ENCODE measurements at regions of chr18 and their contacts with region 1.

Region 1: GRCh38 chr18:45874491-45875184 is 49.2 kb downstream of the SIGLEC15 start:
- DNase-seq: peak; percentile 84
- ATAC-seq: peak; percentile 91
- H3K4me3 Mint-ChIP-seq: peak overlapping the region; percentile 41
- H3K27ac Mint-ChIP-seq: peak overlapping the region; percentile 96
- H3K4me1 Mint-ChIP-seq: peaks cover 34% of the 10 kb centered on the region
- H3K27me3 Mint-ChIP-seq: no peaks in the 10 kb centered on the region

Region 2: GRCh38 chr18:45526114-45526841 is 348.4 kb before region 1 on chr18:
- CTCF ChIA-PET with region 1: no interaction called
- POLR2A ChIA-PET with region 1: no interaction called
- intact Hi-C with region 1: no loop called
- DNase-seq: no peak
- ATAC-seq: no peak
- H3K4me3 Mint-ChIP-seq: no peak overlapping the region
- H3K27ac Mint-ChIP-seq: no peak overlapping the region
- H3K4me1 Mint-ChIP-seq: no peaks in the 10 kb centered on the region
- H3K27me3 Mint-ChIP-seq: peaks cover 9% of the 10 kb centered on the region

Region 3: GRCh38 chr18:45670281-45670962 is 204.2 kb before region 1 on chr18:
- CTCF ChIA-PET with region 1: interaction called, 172 read pairs
- POLR2A ChIA-PET with region 1: no interaction called
- intact Hi-C with region 1: loop called (anchors 1 kb)
- DNase-seq: peak; percentile 79
- ATAC-seq: peak; percentile 73
- H3K4me3 Mint-ChIP-seq: peak overlapping the region; percentile 56
- H3K27ac Mint-ChIP-seq: peak overlapping the region; percentile 85
- H3K4me1 Mint-ChIP-seq: peaks cover 63% of the 10 kb centered on the region
- H3K27me3 Mint-ChIP-seq: no peaks in the 10 kb centered on the region

Region 4: DNA sequence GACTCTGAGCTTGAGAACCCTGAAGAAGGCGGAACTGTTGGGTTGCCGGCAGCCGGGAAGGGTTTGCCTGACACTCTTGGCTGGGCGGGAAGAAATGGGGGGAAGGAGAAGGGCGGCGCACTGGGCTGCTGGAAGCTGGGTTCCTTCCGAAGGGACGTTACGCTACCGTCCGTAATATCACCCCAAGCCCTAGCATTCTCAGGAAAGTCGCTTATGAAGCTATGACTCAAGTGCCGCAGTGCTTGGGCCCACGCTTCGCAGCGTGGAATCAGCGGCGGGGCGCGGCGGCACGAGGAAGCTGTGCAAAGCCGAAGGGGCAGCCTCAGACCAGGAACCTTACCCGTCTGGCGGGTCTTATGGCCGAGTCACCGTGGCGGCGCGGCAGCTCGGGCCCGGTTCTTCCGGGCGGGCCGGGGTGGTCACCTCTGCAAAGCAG is 99.4 kb before region 1 on chr18:
- CTCF ChIA-PET with region 1: no interaction called
- POLR2A ChIA-PET with region 1: interaction called, 4 read pairs
- intact Hi-C with region 1: loop called in 1 of 2 experiments (anchors 2 kb)
- DNase-seq: peak; percentile 85
- ATAC-seq: peak; percentile 95
- H3K4me3 Mint-ChIP-seq: peak overlapping the region; percentile 75
- H3K27ac Mint-ChIP-seq: peak overlapping the region; percentile 49
- H3K4me1 Mint-ChIP-seq: peaks cover 16% of the 10 kb centered on the region
- H3K27me3 Mint-ChIP-seq: peaks cover 29% of the 10 kb centered on the region